GM12878 (cell line): ENCODE measurements at regions of chr18 and their contacts with region 1.

Region 1: GRCh38 chr18:48022531-48023329 is 92.3 kb upstream of the SMAD2 start:
- DNase-seq: peak; percentile 12
- ATAC-seq: peak; percentile 88
- H3K4me3 ChIP-seq: no peak overlapping the region
- H3K27ac ChIP-seq: no peak overlapping the region
- H3K4me1 ChIP-seq: no peaks in the 10 kb centered on the region; the same call in 1 of the 2 replicates
- H3K27me3 ChIP-seq: peaks cover 0 to 2% of the 10 kb centered on the region in 2 experiments; a peak in 1 of 4 replicates
- CTCF ChIP-seq: peak; percentile 47 to 65 (median 51); a peak in 5 of 6 replicates
- EP300 ChIP-seq: no peak
- POLR2A ChIP-seq: no peak
- RAD21 ChIP-seq: peak; percentile 73

Region 2: DNA sequence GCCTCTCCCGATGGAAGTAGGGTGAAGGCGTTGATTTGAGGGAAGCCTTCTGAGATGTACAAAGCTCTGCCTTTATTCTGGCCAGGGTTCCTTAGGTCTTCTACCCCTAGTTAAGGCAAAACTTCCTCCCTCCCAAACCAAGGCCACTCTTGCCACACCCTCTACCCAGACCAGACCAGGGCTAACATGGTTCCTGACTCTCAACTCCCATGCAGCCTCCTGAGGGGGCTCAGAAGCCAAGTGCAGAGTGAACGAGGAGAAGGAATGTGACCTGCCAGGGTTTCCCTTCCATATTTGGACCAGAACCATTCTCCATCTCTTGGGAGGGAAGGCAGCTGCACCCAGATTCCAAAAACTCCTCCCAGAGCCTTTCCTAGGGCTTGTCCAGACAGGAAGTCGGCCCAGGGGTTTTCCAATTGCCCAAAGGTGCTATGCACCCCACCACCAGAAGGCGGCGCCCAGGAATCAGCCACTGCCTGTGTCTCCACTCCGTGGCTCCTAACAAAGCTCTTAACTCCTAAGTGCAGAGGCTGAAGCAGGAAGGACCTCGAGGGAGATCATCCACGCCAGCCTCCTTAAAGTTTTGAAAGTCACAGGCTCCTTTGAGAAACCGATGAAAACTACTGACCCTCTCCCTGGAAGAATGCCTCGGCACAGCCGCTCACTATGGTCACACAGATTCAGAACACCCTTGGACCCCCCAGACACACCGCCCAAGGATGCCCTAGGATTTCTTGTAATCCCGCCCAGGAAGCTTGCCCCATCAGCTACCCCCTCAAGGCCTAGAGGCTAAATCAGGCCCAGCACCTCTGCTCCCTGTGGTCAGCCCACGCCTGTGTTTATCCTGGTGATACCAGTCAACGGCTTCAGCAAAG is 250.1 kb before region 1 on chr18:
- CTCF ChIA-PET with region 1: interaction called, 12 read pairs
- POLR2A ChIA-PET with region 1: no interaction called
- RAD21 ChIA-PET with region 1: interaction called, 5 read pairs
- SMC1A ChIA-PET with region 1: interaction called, 3 read pairs
- in situ Hi-C with region 1: loop called (anchors 5 kb)
- intact Hi-C with region 1: loop called (anchors 1 kb)
- DNase-seq: no peak
- ATAC-seq: peak; percentile 87
- H3K4me3 ChIP-seq: no peak overlapping the region
- H3K27ac ChIP-seq: no peak overlapping the region
- H3K4me1 ChIP-seq: no peaks in the 10 kb centered on the region
- H3K27me3 ChIP-seq: no peaks in the 10 kb centered on the region
- CTCF ChIP-seq: peak; percentile 88 to 99 (median 91)
- EP300 ChIP-seq: no peak
- POLR2A ChIP-seq: no peak
- RAD21 ChIP-seq: peak; percentile 89

Region 3: DNA sequence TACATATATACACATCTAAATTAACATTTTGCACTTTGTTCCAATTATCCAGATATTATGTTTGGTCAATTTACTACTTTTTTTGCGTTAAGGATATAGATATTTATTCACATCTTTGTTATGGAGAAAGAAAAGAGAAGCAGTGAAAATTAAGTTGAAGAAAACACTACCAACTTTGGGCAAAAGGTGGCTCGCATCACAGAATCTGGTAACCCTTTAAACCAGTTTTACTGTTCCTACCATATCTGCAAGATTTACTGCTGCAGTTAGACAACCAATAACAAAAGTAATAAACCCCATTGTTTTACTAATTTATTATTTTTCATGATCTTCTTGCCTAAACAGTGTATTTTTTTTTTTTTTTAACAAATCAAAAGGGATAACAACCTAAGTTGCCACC is 145.9 kb before region 1 on chr18:
- CTCF ChIA-PET with region 1: no interaction called
- POLR2A ChIA-PET with region 1: no interaction called
- RAD21 ChIA-PET with region 1: no interaction called
- SMC1A ChIA-PET with region 1: no interaction called
- in situ Hi-C with region 1: no loop called
- intact Hi-C with region 1: loop called (anchors 5 kb)
- DNase-seq: no peak
- ATAC-seq: no peak
- H3K4me3 ChIP-seq: no peak overlapping the region
- H3K27ac ChIP-seq: no peak overlapping the region
- H3K4me1 ChIP-seq: no peaks in the 10 kb centered on the region
- H3K27me3 ChIP-seq: no peaks in the 10 kb centered on the region
- CTCF ChIP-seq: no peak
- EP300 ChIP-seq: no peak
- POLR2A ChIP-seq: no peak
- RAD21 ChIP-seq: no peak

Region 4: DNA sequence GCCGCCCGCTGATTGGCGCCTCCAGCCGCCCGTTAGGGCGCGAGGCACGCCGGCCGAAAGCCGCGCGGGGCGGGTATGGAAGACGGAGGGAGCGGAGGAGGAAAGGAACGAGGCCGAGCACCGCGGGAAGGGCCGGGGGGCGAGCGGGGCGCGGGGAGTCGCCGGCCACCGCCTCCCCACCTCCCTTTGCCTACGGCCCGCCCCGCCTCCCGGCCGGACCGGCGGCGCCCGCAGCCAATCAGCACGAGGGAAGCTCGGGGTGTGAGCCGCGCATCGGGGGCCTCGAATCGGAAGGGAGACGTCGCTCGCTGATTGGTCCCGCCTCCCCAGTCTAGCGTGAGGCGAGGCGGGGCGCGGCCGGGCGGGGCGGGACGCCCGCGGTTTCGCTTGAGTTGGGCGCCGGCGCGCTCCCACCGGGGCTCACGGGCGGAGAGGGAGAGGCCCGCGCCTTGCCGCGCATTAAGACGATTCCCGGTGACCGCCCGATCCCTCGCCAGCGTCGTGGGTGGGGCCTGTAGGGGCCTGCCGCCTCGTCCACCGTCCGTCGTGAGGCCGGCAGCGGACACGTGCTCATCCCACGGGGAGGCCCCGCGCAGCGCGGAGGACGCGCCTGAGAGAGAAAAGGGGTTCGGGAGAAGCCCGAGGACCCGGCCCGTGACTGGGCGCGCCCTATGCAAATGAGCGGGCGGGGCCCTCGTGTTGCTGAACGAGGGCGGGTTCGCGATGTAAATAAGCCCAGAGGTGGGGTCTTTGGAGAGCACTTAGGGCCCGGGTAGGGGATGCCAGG is 91.6 kb before region 1 on chr18:
- CTCF ChIA-PET with region 1: no interaction called
- POLR2A ChIA-PET with region 1: no interaction called
- RAD21 ChIA-PET with region 1: no interaction called
- SMC1A ChIA-PET with region 1: no interaction called
- in situ Hi-C with region 1: no loop called
- intact Hi-C with region 1: loop called (anchors 5 kb)
- DNase-seq: peak; percentile 73
- ATAC-seq: peak; percentile 90
- H3K4me3 ChIP-seq: peak overlapping the region; percentile 63; the same call in 1 of the 2 replicates
- H3K27ac ChIP-seq: peak overlapping the region; percentile 86
- H3K4me1 ChIP-seq: no peaks in the 10 kb centered on the region
- H3K27me3 ChIP-seq: no peaks in the 10 kb centered on the region
- CTCF ChIP-seq: no peak
- EP300 ChIP-seq: no peak
- POLR2A ChIP-seq: peak; percentile 83
- RAD21 ChIP-seq: no peak